ENCODE measurements at regions of chr1 and their contacts with region 1.

Region 1: GRCh38 chr1:36463803-36464604 is at the start of gene MRPS15:
- DNase-seq: peak; percentile 92
- H3K4me3 Mint-ChIP-seq: peak within 1 kb of the TSS; percentile 100
- H3K27ac Mint-ChIP-seq: peak within 1 kb of the TSS; percentile 97
- H3K4me1 Mint-ChIP-seq: peaks cover 63% of the 10 kb centered on the region
- H3K27me3 Mint-ChIP-seq: no peaks in the 10 kb centered on the region
- total RNA-seq, gene MRPS15: 118 and 121 TPM in 2 replicates

Region 2: DNA sequence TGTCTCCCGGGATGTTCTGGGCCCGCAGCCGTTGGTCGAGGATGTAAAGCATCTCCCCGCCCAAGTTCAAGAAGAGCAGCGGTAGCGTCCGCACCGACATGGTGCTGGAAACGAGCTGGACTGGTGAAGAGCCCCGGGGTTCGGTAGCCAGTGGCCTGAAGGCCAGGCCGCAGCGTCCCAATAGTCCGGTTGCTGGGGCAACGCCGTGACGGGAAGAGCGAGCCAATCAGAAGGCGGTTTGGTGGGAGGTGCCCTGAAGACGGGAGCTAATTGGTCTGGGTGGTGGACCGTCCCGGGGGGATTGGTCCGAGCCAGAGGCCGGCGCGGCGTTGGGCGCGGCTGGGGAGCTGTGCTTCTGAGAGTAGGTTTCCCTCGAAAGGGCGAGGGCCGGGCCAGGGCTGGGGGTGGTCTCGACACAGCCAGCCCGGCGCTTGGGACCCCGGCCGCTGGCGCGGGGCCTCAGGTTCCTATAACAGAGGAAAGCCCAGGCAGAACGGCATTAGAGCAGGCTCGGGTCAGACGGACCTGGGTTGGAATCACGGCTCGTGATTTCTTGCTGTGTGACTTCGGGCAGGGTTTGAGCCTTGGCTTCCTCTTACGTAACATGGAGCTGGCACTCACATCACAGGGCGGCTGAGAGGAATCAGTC is 13.6 kb before region 1 on chr1 and contains the start of gene OSCP1:
- intact Hi-C with region 1: loop called (anchors 1 kb)
- DNase-seq: peak; percentile 86
- H3K4me3 Mint-ChIP-seq: peak within 1 kb of the TSS; percentile 86
- H3K27ac Mint-ChIP-seq: peak within 1 kb of the TSS; percentile 82
- H3K4me1 Mint-ChIP-seq: peaks cover 11% of the 10 kb centered on the region
- H3K27me3 Mint-ChIP-seq: no peaks in the 10 kb centered on the region
- total RNA-seq, gene OSCP1: 0.39 and 0.96 TPM in 2 replicates

Region 3: DNA sequence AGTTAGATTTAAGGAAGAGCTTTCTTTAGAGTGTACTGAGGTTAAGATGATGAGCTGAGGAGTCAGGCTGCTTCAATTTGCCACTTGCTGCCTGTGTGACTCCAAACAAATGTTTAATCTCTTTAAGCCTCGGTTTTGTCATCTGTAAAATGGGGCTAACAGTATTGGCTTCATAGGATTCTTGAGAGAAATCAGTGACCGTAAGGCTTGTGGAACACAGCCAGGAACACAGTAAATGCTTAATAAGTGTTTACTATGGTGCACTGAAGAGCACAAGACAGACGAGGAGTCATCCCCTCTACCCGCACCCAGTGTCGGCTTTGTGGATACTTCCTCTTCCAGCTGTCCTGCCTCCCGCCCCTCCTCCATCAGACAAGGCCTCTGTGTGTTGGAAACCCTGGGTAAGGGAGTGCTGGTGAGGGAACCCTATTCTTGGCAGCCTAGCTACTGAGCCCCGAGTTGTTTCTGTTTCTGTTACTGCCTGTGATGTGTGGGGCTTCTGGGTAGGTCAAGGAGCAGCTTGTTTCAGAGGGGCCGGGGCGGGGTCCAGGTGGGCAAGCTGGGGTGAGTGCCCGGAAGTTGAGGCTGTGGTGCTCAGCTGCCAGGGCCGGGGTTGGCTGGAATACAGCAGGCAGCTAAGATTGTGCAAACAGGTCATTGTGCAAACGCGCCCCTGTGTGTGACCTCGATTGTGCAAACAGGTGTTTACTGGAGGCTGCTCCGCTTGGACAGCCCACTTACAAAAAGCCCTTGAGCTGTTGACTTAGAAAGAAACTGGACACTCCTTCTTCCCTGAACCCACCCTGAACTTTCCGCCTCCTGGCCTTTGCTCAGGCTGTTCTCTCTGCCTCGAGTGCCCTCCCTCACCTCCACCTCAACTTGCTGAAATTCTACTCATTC is 22.7 kb after region 1 on chr1:
- intact Hi-C with region 1: no loop called
- DNase-seq: no peak
- H3K4me3 Mint-ChIP-seq: no peak overlapping the region
- H3K27ac Mint-ChIP-seq: no peak overlapping the region
- H3K4me1 Mint-ChIP-seq: peaks cover 8% of the 10 kb centered on the region
- H3K27me3 Mint-ChIP-seq: peaks cover 9% of the 10 kb centered on the region